Activated CD4-positive, alpha-beta memory T cell treated with anti-CD3 and anti-CD28 coated beads, Interleukin-2, amount 10 ng/mL, durations not matched to agents 7 days and 5 days (primary cell): ENCODE measurements at regions of chr2 and their contacts with region 1.

Region 1: GRCh38 chr2:135531231-135532228 is at the start of gene R3HDM1:
- DNase-seq: peak; percentile 96
- H3K4me3 Mint-ChIP-seq: no peak within 1 kb of the TSS
- H3K27ac Mint-ChIP-seq: no peak within 1 kb of the TSS
- H3K4me1 Mint-ChIP-seq: peaks cover 31% of the 10 kb centered on the region
- H3K27me3 Mint-ChIP-seq: no peaks in the 10 kb centered on the region
- total RNA-seq, gene R3HDM1: 37.3 to 38.5 TPM

Region 2: DNA sequence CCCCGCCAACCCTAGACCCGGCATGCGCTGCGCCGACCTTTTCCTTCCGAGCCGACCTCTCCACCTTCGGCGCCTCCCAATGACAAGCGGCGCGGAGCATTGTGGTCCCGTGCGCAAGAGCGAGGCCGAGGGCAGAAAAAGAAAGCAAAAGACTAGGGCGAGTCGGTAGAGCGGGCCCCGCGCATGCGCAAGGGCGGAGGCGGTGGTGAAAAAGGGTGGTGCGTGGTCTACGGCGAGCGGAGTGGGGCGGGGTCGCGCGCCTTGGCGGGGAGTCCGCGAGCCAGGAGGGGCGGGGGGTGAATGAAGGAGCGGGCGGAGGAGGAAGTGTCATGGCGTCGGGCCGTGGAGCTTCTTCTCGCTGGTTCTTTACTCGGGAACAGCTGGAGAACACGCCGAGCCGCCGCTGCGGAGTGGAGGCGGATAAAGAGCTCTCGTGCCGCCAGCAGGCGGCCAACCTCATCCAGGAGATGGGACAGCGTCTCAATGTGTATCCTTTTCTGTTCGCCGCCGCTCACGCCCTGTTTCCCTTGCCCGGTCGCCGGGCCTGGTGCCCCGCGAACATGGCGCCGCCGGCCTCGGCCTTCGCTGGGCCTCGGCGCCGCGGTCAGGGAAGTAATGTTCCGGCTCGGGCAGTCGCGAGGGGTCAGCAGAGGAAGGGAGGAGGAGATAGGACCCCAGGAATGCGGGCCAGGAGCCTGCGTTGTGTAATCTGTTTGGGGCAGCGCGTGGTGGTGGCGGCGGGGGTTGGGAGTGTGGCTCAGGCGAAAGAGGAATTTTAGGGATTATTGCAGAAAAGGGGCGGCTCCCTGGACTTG is 612.8 kb before region 1 on chr2 and contains the start of gene CCNT2:
- CTCF ChIA-PET with region 1: no interaction called
- POLR2A ChIA-PET with region 1: interaction called, 13 read pairs
- DNase-seq: peak; percentile 99
- H3K4me3 Mint-ChIP-seq: peak within 1 kb of the TSS; percentile 93
- H3K27ac Mint-ChIP-seq: peak within 1 kb of the TSS; percentile 95
- H3K4me1 Mint-ChIP-seq: peaks cover 33% of the 10 kb centered on the region
- H3K27me3 Mint-ChIP-seq: peaks cover 4% of the 10 kb centered on the region
- total RNA-seq, gene CCNT2: 35.8 to 37.4 TPM

Region 3: DNA sequence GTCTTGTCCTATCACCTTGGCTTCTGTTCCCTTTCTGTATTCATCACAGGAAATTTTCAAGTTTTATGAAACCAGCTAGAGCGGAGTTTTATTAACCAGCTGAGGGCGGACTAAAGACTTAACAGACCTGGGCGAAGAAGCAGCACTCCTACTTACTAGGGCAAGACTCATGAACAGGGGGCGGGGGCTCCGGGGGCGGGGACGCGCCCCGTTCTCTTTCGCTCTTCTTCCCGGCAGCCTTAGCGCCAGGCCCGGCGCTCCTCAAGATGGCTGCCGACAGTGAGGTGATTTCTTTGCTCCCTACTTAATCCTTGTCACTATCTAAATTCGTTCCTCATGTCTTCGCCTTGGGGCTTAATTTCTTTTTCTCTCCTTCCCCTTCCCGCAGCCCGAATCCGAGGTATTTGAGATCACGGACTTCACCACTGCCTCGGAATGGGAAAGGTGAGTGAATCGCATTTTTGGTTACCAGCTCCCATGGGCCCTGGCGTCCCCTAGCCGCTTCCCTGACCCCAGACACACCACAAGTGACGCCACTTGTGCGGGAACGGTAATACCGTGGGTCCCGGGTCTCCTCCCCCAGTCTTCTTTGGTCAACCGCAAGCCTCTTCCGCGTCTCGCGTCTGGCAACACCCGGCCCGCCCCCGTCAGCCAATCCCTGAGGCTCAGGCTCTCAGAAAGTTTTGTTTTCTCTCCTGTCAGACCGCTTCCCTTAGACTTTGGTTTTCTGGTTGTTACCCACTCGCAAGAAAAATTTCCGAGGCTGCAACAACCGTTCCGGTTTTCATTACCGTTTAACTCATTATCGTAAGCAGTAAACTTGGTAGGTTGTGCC is 479.3 kb before region 1 on chr2 and contains the start of gene RAB3GAP1:
- CTCF ChIA-PET with region 1: no interaction called
- POLR2A ChIA-PET with region 1: interaction called, 30 read pairs
- DNase-seq: peak; percentile 95
- H3K4me3 Mint-ChIP-seq: peak within 1 kb of the TSS; percentile 81
- H3K27ac Mint-ChIP-seq: peak within 1 kb of the TSS; percentile 99
- H3K4me1 Mint-ChIP-seq: peaks cover 39% of the 10 kb centered on the region
- H3K27me3 Mint-ChIP-seq: peaks cover 3% of the 10 kb centered on the region
- total RNA-seq, gene RAB3GAP1: 22.9 to 23.0 TPM

Region 4: GRCh38 chr2:135494503-135494902 is 37.0 kb before region 1 on chr2:
- CTCF ChIA-PET with region 1: no interaction called
- POLR2A ChIA-PET with region 1: no interaction called
- DNase-seq: no peak
- H3K4me3 Mint-ChIP-seq: no peak overlapping the region
- H3K27ac Mint-ChIP-seq: no peak overlapping the region
- H3K4me1 Mint-ChIP-seq: no peaks in the 10 kb centered on the region
- H3K27me3 Mint-ChIP-seq: no peaks in the 10 kb centered on the region

Region 5: GRCh38 chr2:135741395-135742324 is 210.1 kb after region 1 on chr2 and contains the start of gene UBXN4:
- CTCF ChIA-PET with region 1: interaction called, 3 read pairs
- POLR2A ChIA-PET with region 1: interaction called, 20 read pairs
- DNase-seq: peak; percentile 97
- H3K4me3 Mint-ChIP-seq: peak within 1 kb of the TSS; percentile 98
- H3K27ac Mint-ChIP-seq: peak within 1 kb of the TSS; percentile 100
- H3K4me1 Mint-ChIP-seq: peaks cover 34% of the 10 kb centered on the region
- H3K27me3 Mint-ChIP-seq: no peaks in the 10 kb centered on the region
- total RNA-seq, gene UBXN4: 118 to 126 TPM